ENCODE measurements at regions of chr22 and their contacts with region 1.

Region 1: DNA sequence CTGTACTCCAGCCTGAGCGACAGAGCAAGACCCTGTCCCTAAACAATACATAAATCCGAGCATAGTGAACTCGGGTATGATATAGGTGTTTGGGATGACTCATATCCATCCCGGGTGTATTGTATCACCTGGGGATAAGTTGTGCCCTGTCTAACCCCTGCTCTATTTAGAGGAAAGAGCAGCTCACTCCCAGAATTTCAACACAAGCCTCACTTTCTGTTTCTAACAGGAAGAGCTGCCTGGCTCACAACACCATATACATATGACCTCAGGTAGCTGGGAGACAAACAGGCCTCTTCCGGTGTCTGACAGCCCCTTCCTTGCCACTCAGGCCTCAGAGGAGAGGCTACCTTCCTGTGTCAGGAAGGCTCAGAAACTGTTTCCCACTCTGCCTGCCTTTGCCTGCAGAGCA is 9.9 kb upstream of the MICALL1 start:
- DNase-seq: no peak
- H3K4me3 ChIP-seq: no peak overlapping the region
- H3K27ac ChIP-seq: no peak overlapping the region
- H3K4me1 ChIP-seq: peaks cover 16% of the 10 kb centered on the region
- H3K27me3 ChIP-seq: no peaks in the 10 kb centered on the region
- CTCF ChIP-seq: no peak
- EP300 ChIP-seq: no peak
- POLR2A ChIP-seq: no peak

Region 2: DNA sequence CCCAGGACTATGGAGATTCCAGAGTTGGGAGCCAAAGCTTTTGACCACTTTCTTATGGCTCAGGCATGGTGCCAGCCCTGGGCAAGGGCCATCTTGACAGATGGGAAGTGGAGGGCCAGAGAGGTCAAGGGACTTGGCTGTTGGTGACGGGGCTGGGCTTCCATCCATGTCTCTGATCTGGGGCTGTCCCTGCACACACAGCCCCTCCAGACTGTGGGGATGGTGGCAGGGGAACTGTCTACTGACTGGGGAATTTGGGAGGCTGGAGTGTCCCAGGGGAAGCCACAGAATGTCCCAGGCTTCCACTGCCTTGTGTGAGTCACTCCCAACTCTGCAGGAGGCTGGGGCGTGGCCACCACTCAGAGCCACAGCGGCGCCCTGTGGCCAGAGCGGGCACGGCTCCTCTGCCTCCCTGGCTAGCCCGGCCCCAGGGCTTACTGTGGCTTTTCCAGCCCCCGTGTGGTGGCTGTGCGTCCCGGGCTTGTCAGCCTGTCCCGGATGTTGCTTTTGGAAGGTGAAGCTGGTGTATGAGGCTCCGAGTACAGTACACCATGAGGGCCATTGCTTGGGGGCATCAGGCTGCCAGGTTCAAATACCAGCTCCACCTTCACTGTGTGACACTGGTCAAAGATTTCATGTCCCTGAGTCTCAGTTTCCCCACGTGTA is 37.7 kb after region 1 on chr22:
- intact Hi-C with region 1: loop called in 2 of 4 experiments (anchors 5 kb)
- DNase-seq: peak; percentile 83 to 92 (median 87)
- H3K4me3 ChIP-seq: no peak overlapping the region
- H3K27ac ChIP-seq: peak overlapping the region; percentile 41 to 62
- H3K4me1 ChIP-seq: peaks cover 11% of the 10 kb centered on the region
- H3K27me3 ChIP-seq: no peaks in the 10 kb centered on the region
- CTCF ChIP-seq: peak; percentile 85 to 94 (median 92)
- EP300 ChIP-seq: no peak
- POLR2A ChIP-seq: no peak